Common myeloid progenitor, CD34-positive (primary cell): ENCODE measurements at regions of chr15 and their contacts with region 1.

Region 1: DNA sequence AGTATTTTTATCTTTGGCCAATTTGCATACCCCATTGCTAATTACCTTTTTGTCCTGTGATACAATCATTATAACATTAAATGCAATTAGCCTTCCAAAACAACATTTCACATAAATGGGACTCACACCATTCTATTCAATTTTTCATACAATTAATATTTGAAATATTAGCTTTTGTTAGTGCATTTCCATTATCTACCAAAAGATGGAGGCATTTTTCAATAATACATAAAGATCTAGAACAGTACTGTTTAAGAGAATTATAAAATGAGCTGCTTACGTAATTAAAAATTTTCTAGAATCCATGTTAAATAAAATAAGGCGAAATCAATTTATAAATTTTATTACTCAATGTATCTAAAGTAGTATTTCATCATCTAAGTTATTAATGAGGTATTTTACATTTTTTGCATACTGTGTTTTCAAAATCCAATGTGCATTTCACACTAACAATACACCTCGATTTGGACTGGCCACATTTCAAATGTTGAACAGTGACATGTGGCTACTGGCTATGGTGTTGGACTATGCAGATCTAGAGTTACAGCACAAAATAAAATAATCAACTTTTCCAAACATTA is 74.3 kb downstream of the TJP1 start:
- DNase-seq: peak; percentile 8 to 37 (median 26)
- H3K4me3 ChIP-seq: no peak overlapping the region
- H3K27ac ChIP-seq: no peak overlapping the region
- H3K4me1 ChIP-seq: no peaks in the 10 kb centered on the region
- H3K27me3 ChIP-seq: peaks cover 0 to 20% (median 6%) of the 10 kb centered on the region in 5 experiments

Region 2: GRCh38 chr15:29522373-29523276 is 225.3 kb before region 1 on chr15:
- CTCF ChIA-PET with region 1: no interaction called
- POLR2A ChIA-PET with region 1: no interaction called
- DNase-seq: no peak
- H3K4me3 ChIP-seq: no peak overlapping the region
- H3K27ac ChIP-seq: no peak overlapping the region
- H3K4me1 ChIP-seq: no peaks in the 10 kb centered on the region
- H3K27me3 ChIP-seq: peaks cover 0 to 1% (median 0%) of the 10 kb centered on the region in 5 experiments

Region 3: GRCh38 chr15:29759596-29759995 is 11.7 kb after region 1 on chr15:
- CTCF ChIA-PET with region 1: no interaction called
- POLR2A ChIA-PET with region 1: no interaction called
- DNase-seq: no peak
- H3K4me3 ChIP-seq: no peak overlapping the region
- H3K27ac ChIP-seq: no peak overlapping the region
- H3K4me1 ChIP-seq: no peaks in the 10 kb centered on the region
- H3K27me3 ChIP-seq: peaks cover 0 to 34% (median 5%) of the 10 kb centered on the region in 5 experiments

Region 4: GRCh38 chr15:29774900-29775299 is 27.0 kb after region 1 on chr15:
- CTCF ChIA-PET with region 1: no interaction called
- POLR2A ChIA-PET with region 1: no interaction called
- DNase-seq: no peak
- H3K4me3 ChIP-seq: no peak overlapping the region
- H3K27ac ChIP-seq: no peak overlapping the region
- H3K4me1 ChIP-seq: no peaks in the 10 kb centered on the region
- H3K27me3 ChIP-seq: peaks cover 0 to 55% (median 10%) of the 10 kb centered on the region in 5 experiments

Region 5: DNA sequence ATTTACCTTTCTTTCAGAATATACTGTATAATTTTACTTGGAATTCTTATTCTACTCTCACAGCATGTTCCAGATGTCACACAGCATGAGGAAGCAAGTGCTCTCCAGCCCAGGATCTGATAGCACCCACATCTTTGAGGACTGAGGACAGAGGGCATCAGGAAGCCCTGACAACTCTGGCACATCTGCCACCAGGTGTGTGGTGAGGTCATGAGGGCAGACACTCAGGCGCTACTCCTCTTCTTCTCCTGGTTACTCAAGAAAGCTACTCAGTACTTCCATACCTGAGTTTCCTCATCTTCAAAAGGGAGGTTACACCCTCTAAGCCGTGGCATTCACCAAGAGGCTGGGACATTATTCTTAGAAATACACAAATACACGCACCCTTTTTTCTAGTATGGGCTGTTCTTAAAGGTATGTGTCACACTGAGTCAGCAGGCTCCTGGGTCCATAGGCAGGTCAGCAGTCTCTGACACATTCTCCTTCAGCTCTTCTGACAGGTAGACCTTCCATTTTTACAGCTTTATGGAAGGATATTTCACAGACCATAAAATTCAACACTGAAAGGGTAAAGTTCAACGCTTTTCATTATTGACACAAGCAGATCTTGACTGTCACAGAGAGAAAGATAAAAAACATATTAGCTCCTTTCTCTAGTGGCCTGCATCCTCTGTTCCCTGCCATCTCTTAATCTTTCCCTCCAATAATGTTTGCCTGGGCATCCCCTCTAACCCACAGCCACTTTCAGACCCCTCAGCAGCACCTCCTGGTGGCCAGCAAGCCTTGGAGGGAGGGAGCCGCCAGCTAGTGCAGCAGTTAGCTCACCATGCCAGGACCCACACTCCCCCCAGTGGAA is 177.5 kb after region 1 on chr15:
- CTCF ChIA-PET with region 1: interaction called, 17 read pairs
- POLR2A ChIA-PET with region 1: no interaction called
- DNase-seq: peak; percentile 37 to 55 (median 55)
- H3K4me3 ChIP-seq: no peak overlapping the region
- H3K27ac ChIP-seq: no peak overlapping the region
- H3K4me1 ChIP-seq: no peaks in the 10 kb centered on the region
- H3K27me3 ChIP-seq: peaks cover 6 to 48% (median 9%) of the 10 kb centered on the region in 5 experiments